AG04449 (cell line): ENCODE measurements at regions of chr3 and their contacts with region 1.

Region 1: DNA sequence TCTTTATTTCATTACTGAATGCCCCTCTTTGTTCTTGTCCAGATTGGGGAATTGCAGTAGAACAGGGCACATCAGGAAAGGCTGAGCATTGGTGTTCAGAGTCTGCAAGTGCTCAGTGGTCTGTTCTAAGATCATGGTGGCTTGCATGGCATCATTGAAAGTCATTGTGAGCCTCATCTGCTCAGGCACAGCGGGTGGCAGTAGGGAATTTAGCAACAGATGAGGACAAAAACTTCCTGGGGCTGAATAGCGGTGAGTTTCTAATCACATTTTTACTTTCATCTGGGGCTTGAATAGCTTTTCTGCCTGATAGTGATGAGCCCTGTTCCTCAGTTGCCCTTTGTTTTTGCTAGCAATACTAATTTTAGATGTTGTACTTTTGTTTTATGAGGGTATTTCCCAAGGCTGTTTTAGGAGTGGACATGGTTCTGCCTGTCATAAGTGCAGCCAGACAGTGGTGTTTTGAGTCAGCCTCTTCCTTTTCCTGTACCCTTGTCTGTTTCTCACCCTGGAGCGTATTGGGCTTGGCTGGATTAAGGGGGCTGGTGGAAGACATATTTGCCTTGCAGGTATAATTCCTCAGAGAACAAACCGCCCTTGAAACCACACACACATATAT is 127.2 kb upstream of the IL12A start:
- DNase-seq: no peak
- H3K4me3 ChIP-seq: no peak overlapping the region
- CTCF ChIP-seq: no peak

Region 2: GRCh38 chr3:159872374-159873109 is 11.1 kb after region 1 on chr3:
- CTCF ChIA-PET with region 1: interaction called, 28 read pairs
- POLR2A ChIA-PET with region 1: interaction called, 3 read pairs
- DNase-seq: peak; percentile 66
- H3K4me3 ChIP-seq: no peak overlapping the region
- CTCF ChIP-seq: peak; percentile 19